Transverse colon (tissue), 4 donors: ENCODE measurements at regions of chr2 and their contacts with region 1.

Region 1: DNA sequence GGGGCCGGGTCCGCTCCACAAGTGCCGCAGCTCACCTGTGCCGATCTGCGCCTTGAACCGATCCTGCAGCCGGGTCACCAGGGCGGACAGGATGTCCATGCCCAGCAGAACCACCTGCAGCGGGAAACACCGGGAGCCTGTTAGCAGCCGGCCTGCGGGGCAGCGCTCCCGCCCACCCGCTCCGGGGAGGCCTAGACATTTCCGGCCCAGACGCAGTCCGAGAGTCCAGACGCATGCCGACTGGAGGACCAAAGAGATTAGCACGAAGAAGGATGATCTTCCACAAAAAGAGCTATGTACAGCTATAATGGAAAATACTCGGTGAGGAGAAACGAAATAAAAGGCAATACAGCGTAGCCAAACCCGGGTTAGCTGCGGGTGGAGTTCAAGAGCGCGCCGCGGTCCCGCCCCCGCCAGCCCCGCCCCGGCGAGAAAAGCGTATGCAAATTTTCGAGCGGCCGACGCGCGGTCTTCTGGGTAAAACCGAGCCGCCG is 421 bp upstream of the RNU4ATAC start:
- DNase-seq: peak; percentile 86
- H3K4me3 ChIP-seq: peak overlapping the region; percentile 7 to 66 (median 56)
- H3K27ac ChIP-seq: peak overlapping the region; percentile 92 to 98 (median 94)
- H3K4me1 ChIP-seq: peaks cover 7 to 25% (median 21%) of the 10 kb centered on the region in 4 donors
- H3K27me3 ChIP-seq: no peaks in the 10 kb centered on the region
- CTCF ChIP-seq: no peak
- EP300 ChIP-seq: no peak
- POLR2A ChIP-seq: no peak

Region 2: DNA sequence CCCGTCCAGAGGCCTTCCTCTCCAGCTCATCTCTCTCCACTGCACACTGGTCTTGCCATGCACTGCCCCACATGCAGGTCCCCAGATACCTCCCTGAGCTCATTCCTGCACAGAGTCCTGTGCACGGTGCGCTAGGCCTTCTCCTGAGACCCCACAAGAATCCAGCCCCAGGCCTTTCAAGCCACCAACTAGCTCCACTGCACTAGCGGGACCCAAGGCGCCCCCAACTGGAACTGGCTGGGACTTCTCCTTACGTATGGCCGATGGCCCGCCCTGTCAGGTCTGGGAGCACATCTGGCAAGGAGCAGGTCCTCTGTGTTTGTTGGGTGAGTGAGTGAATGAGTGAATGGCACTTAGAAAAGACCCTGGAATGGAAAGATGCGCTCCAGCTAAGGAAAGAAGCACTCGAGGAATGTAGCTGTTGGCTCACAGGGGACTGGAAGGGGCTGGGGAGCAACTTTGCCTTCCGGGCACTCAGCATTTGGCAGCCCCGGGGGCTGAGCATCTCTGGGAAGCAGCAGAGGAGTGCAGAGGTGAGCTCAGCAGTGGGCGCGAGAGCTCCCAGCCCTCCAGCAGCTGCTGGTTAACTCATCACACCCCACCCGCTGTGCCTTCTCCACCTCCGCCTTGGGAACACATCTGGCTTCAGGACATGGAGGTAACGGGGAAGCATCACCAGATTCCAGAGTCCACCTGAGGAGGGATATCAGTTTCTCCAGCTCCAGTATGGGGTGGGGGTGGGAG is 571.5 kb before region 1 on chr2:
- in situ Hi-C with region 1: no loop called
- intact Hi-C with region 1: no loop called
- DNase-seq: no peak
- H3K4me3 ChIP-seq: no peak overlapping the region
- H3K27ac ChIP-seq: no peak overlapping the region
- H3K4me1 ChIP-seq: peaks cover 0 to 12% (median 0%) of the 10 kb centered on the region in 4 donors
- H3K27me3 ChIP-seq: no peaks in the 10 kb centered on the region
- CTCF ChIP-seq: no peak
- EP300 ChIP-seq: no peak
- POLR2A ChIP-seq: no peak

Region 3: DNA sequence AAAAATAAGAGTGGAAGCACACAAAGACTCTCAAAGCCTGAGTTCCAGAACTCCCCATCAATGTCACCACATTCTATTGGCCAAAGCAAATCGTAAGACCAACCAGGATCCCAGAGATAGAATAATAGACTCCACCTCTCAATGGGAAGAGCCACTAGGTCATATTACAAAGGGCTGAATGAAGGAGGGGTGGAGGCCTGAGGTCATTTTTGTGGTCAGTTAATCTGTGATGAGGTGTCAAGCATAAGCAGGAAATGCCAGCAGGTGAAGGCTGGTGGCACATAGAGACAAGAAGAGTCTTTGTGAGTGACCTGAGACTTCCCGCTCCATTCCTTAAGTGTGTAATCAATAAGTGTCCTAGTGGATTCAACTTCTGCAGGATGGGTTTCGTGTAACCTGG is 389.5 kb before region 1 on chr2:
- in situ Hi-C with region 1: no loop called
- intact Hi-C with region 1: no loop called
- DNase-seq: no peak
- H3K4me3 ChIP-seq: no peak overlapping the region
- H3K27ac ChIP-seq: no peak overlapping the region
- H3K4me1 ChIP-seq: no peaks in the 10 kb centered on the region
- H3K27me3 ChIP-seq: no peaks in the 10 kb centered on the region
- CTCF ChIP-seq: no peak
- EP300 ChIP-seq: no peak
- POLR2A ChIP-seq: no peak

Region 4: GRCh38 chr2:121492409-121492808 is 37.9 kb before region 1 on chr2:
- in situ Hi-C with region 1: no loop called
- intact Hi-C with region 1: loop called (anchors 1 kb)
- DNase-seq: no peak
- H3K4me3 ChIP-seq: no peak overlapping the region
- H3K27ac ChIP-seq: no peak overlapping the region
- H3K4me1 ChIP-seq: peaks cover 0 to 14% (median 4%) of the 10 kb centered on the region in 4 donors
- H3K27me3 ChIP-seq: no peaks in the 10 kb centered on the region
- CTCF ChIP-seq: no peak
- EP300 ChIP-seq: no peak
- POLR2A ChIP-seq: no peak

Region 5: GRCh38 chr2:121649596-121650314 is 119.5 kb after region 1 on chr2:
- in situ Hi-C with region 1: loop called in 1 of 4 experiments (anchors 10 kb)
- intact Hi-C with region 1: loop called (anchors 2 kb)
- DNase-seq: peak; percentile 97
- H3K4me3 ChIP-seq: peak overlapping the region; percentile 36 to 96 (median 84)
- H3K27ac ChIP-seq: peak overlapping the region; percentile 95 to 99 (median 98)
- H3K4me1 ChIP-seq: peaks cover 0 to 34% (median 25%) of the 10 kb centered on the region in 4 donors
- H3K27me3 ChIP-seq: no peaks in the 10 kb centered on the region
- CTCF ChIP-seq: no peak
- EP300 ChIP-seq: no peak
- POLR2A ChIP-seq: peak; percentile 66

Region 6: DNA sequence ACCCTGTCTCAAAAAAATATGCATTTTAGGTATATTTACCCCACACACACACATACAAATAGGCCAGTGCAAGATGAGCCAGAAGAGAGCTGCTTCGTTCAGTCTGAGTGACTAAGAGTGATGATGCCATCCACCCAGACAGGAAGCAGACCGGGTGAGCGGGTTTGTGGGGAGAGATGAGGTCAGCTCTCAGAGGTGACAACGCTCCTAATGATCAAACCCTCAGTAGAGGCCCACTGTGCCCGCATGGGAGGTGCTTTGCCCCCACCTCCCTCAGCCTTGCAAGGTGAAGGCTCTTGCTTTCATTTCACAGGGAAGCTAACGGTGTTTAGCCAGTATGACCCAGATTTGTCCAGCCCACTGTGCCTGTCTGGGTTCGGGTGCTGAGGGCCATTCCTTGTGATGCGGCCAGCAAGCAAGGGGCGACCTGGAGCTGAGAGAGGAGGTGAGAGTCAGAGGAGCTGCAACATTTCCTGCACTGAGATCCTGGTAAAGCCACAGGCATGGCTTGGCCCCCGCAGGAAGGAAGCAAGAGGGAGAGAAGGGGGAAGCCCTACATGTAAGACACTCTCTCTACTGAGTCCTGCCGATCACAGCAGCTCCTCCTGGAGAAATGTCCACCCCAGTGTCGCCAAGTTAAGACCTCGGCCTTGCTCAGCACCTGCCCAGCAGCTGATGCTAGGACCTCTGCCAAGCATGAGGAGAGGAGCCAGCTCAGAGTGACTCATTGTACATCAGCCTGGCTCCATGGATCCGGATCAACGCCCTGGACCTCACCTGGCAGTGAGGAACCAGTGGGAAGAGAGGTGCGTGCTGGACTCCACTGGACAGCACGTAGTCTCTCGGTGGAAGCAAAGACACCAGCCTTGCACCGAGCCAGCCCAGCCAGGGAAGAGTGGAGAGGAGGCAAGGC is 169.4 kb after region 1 on chr2:
- in situ Hi-C with region 1: loop called in 1 of 4 experiments (anchors 25 kb)
- intact Hi-C with region 1: no loop called
- DNase-seq: peak; percentile 52
- H3K4me3 ChIP-seq: no peak overlapping the region
- H3K27ac ChIP-seq: peak overlapping the region in 1 of 4 donors; percentile 23
- H3K4me1 ChIP-seq: peaks cover 0 to 5% (median 0%) of the 10 kb centered on the region in 4 donors
- H3K27me3 ChIP-seq: no peaks in the 10 kb centered on the region
- CTCF ChIP-seq: no peak
- EP300 ChIP-seq: no peak
- POLR2A ChIP-seq: no peak

Region 7: GRCh38 chr2:121710470-121711170 is 180.4 kb after region 1 on chr2:
- in situ Hi-C with region 1: loop called in 2 of 4 experiments (anchors 10 to 25 kb)
- intact Hi-C with region 1: loop called (anchors 10 kb)
- DNase-seq: no peak
- H3K4me3 ChIP-seq: no peak overlapping the region
- H3K27ac ChIP-seq: no peak overlapping the region
- H3K4me1 ChIP-seq: peaks cover 0 to 16% (median 1%) of the 10 kb centered on the region in 4 donors
- H3K27me3 ChIP-seq: no peaks in the 10 kb centered on the region
- CTCF ChIP-seq: no peak
- EP300 ChIP-seq: no peak
- POLR2A ChIP-seq: no peak

Region 8: GRCh38 chr2:121736462-121737341 is 206.4 kb after region 1 on chr2 and contains the start of gene NIFK:
- in situ Hi-C with region 1: loop called in 1 of 4 experiments (anchors 25 kb)
- intact Hi-C with region 1: loop called (anchors 10 kb)
- DNase-seq: peak; percentile 100
- H3K4me3 ChIP-seq: peak within 1 kb of the TSS; percentile 69 to 92 (median 86)
- H3K27ac ChIP-seq: peak within 1 kb of the TSS; percentile 80 to 97 (median 88)
- H3K4me1 ChIP-seq: peaks cover 0 to 15% (median 13%) of the 10 kb centered on the region in 4 donors
- H3K27me3 ChIP-seq: no peaks in the 10 kb centered on the region
- CTCF ChIP-seq: peak in 1 of 5 experiments; percentile 28
- EP300 ChIP-seq: no peak
- POLR2A ChIP-seq: peak; percentile 70
- total RNA-seq, gene NIFK: 10.9 to 32.7 (median 18.7) TPM

Region 9: DNA sequence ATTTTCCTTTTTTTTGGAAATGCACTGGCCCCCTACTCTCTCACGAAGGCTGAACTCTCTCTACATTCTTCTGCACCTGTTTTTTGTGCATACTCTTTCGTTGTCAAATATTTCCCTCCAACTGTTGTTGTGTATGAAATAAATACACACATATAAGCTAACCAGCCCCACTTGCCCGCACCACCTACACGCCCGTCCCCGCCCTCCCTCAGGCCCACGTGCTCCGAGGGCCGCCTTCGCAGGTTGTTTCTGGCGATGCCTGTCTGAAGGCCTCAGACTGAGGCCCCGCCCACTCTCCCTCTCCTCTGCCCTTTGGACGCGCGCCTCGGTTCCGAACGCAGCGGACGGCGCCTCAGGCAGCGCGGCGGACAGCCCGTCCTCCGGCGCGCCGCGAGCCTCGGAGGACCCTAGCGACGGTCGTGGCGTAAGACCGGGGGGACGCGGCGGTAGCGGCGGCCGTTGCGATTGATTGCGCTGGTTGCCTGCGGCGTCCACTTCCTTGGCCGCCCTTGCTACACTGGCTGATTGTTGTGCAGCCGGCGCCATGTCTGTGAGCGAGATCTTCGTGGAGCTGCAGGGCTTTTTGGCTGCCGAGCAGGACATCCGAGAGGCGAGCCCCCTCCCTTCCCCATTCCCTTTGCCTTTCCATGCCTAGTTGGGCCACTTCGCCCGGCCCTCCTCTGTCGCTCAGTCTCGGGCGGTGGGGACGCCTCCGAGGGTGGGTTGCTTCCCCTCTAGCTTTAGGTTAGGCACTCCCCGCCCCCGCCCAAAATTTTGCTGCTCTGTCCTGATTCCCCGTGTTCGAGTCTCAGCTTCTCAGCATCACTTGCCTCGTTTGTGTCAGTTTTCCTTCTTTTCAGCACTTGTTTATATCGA is 225.2 kb after region 1 on chr2 and contains the start of gene TSN:
- in situ Hi-C with region 1: no loop called
- intact Hi-C with region 1: loop called (anchors 10 kb)
- DNase-seq: peak; percentile 99
- H3K4me3 ChIP-seq: peak within 1 kb of the TSS; percentile 74 to 91 (median 87)
- H3K27ac ChIP-seq: peak within 1 kb of the TSS; percentile 82 to 87 (median 85)
- H3K4me1 ChIP-seq: peaks cover 16 to 28% (median 21%) of the 10 kb centered on the region in 4 donors
- H3K27me3 ChIP-seq: no peaks in the 10 kb centered on the region
- CTCF ChIP-seq: peak in 3 of 5 experiments; percentile 7 to 28 (median 26)
- EP300 ChIP-seq: no peak
- POLR2A ChIP-seq: peak; percentile 75
- total RNA-seq, gene TSN: 8.2 to 33.5 (median 23.7) TPM